Heart right ventricle (tissue), 16 donors: ENCODE measurements at regions of chr7 and their contacts with region 1.

Region 1: GRCh38 chr7:7681179-7681935 is 37.0 kb downstream of the RPA3 start:
- DNase-seq: peak in 1 of 2 donors; percentile 81
- ATAC-seq: peak in 7 of 8 donors; percentile 77 to 95 (median 91)
- H3K4me3 ChIP-seq: peak overlapping the region in 4 of 10 donors; percentile 6 to 13 (median 7)
- H3K27ac ChIP-seq: peak overlapping the region; percentile 7 to 77 (median 46)
- H3K4me1 ChIP-seq: peaks cover 0 to 35% (median 24%) of the 10 kb centered on the region in 9 donors
- H3K27me3 ChIP-seq: no peaks in the 10 kb centered on the region
- CTCF ChIP-seq: peak; percentile 56 to 85 (median 73)

Region 2: GRCh38 chr7:7761340-7761980 is 80.1 kb after region 1 on chr7:
- intact Hi-C with region 1: loop called (anchors 1 to 5 kb)
- DNase-seq: no peak
- ATAC-seq: peak in 7 of 8 donors; percentile 37 to 74 (median 68)
- H3K4me3 ChIP-seq: peak overlapping the region in 9 of 10 donors; percentile 23 to 61 (median 51)
- H3K27ac ChIP-seq: peak overlapping the region; percentile 21 to 86 (median 72)
- H3K4me1 ChIP-seq: peaks cover 0 to 28% (median 11%) of the 10 kb centered on the region in 9 donors
- H3K27me3 ChIP-seq: no peaks in the 10 kb centered on the region
- CTCF ChIP-seq: peak; percentile 21 to 74 (median 57)

Region 3: DNA sequence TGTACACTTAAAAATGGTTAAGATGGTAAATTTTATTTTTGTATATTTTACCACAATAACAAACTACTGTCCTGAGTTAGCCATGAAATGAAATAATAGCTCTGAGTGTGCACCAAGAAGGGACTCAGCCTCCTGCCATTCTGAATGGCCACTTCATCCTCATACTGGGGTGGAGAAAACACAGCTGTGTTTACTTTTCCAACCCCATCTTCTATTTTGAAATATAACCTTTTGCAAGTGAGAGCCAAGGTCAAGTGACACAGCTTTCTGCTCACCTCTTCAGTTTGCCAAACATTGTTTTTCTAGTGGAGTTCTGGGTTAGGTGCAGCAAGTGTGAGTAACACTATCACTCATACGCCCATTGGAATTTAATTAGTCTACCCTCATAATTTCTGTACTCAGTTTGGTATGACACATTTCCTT is 179.9 kb after region 1 on chr7:
- intact Hi-C with region 1: loop called in 1 of 10 experiments (anchors 10 kb)
- DNase-seq: no peak
- ATAC-seq: peak in 3 of 8 donors; percentile 31 to 45 (median 37)
- H3K4me3 ChIP-seq: no peak overlapping the region
- H3K27ac ChIP-seq: no peak overlapping the region
- H3K4me1 ChIP-seq: peaks cover 0 to 29% (median 7%) of the 10 kb centered on the region in 9 donors
- H3K27me3 ChIP-seq: no peaks in the 10 kb centered on the region
- CTCF ChIP-seq: no peak